ENCODE measurements at regions of chr17 and their contacts with region 1.

Region 1: DNA sequence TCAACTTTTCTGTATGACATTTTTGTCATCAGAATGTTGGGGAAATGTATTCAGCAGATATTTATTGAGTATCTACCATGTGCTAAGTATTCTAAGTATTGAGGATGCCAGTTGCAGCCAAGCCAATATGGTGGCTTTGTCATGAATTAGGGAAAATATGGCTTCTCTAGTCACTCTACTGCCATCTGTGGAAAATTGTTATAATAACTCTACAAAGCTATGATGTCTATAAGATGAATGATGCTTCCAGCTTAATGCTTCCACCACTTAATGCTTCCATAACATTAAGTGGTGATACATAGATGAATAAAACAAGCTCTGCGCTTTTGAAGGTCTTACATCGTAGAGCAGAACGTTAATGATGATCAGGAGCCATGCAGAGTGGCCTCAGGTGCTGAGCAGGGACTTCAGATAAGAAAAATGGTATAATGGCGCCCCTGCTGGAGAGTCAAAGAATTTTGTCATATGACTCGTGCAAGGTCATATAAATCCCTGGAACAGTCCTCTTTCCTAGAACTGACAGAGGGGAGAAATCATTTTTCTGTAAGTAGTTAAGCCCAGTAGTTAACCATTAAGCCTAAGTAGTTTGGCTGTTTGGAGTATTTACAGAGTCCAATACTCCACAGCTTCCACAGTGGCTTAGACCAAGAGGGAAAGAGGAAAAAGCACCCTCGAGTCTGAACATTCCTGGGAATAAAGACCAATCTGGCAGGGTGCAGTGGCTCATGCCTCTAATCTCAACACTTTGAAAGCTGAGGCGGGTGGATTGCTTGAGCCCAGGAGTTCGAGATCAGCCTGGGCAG is 2.7 kb upstream of the TMIGD1 start:
- DNase-seq: peak; percentile 95
- ATAC-seq: peak; percentile 76
- H3K4me3 ChIP-seq: peak overlapping the region; percentile 44 to 63 (median 53); a peak in 5 of 6 replicates
- H3K27ac ChIP-seq: peak overlapping the region; percentile 94
- H3K4me1 ChIP-seq: peaks cover 85% of the 10 kb centered on the region
- H3K27me3 ChIP-seq: no peaks in the 10 kb centered on the region
- CTCF ChIP-seq: peak; percentile 80
- EP300 ChIP-seq: peak in 1 of 2 experiments; percentile 35; a peak in 1 of 4 replicates
- POLR2A ChIP-seq: peak; percentile 60 to 76
- RAD21 ChIP-seq: peak; percentile 84

Region 2: GRCh38 chr17:30104575-30105339 is 231.8 kb before region 1 on chr17:
- CTCF ChIA-PET with region 1: interaction called, 15 read pairs
- POLR2A ChIA-PET with region 1: interaction called, 13 read pairs
- in situ Hi-C with region 1: no loop called
- intact Hi-C with region 1: loop called (anchors 2 kb)
- DNase-seq: peak; percentile 88
- ATAC-seq: peak; percentile 98
- H3K4me3 ChIP-seq: peak overlapping the region; percentile 4 to 56 (median 37)
- H3K27ac ChIP-seq: peak overlapping the region; percentile 59
- H3K4me1 ChIP-seq: peaks cover 21% of the 10 kb centered on the region
- H3K27me3 ChIP-seq: 0 out of 5 replicates have a peak, but pooled peaks cover 0 to 1% of the 10 kb centered on the region in 2 experiments
- CTCF ChIP-seq: peak; percentile 94
- EP300 ChIP-seq: peak in 1 of 2 experiments; percentile 4; a peak in 1 of 4 replicates
- POLR2A ChIP-seq: peak in 1 of 2 experiments; percentile 46; a peak in 1 of 4 replicates
- RAD21 ChIP-seq: peak; percentile 79

Region 3: GRCh38 chr17:30124273-30124796 is 212.2 kb before region 1 on chr17:
- CTCF ChIA-PET with region 1: interaction called, 12 read pairs
- POLR2A ChIA-PET with region 1: interaction called, 4 read pairs
- in situ Hi-C with region 1: loop called (anchors 5 kb)
- intact Hi-C with region 1: loop called (anchors 1 kb)
- DNase-seq: no peak
- ATAC-seq: no peak
- H3K4me3 ChIP-seq: no peak overlapping the region
- H3K27ac ChIP-seq: no peak overlapping the region
- H3K4me1 ChIP-seq: peaks cover 24% of the 10 kb centered on the region
- H3K27me3 ChIP-seq: no peaks in the 10 kb centered on the region
- CTCF ChIP-seq: no peak
- EP300 ChIP-seq: no peak
- POLR2A ChIP-seq: no peak
- RAD21 ChIP-seq: no peak

Region 4: DNA sequence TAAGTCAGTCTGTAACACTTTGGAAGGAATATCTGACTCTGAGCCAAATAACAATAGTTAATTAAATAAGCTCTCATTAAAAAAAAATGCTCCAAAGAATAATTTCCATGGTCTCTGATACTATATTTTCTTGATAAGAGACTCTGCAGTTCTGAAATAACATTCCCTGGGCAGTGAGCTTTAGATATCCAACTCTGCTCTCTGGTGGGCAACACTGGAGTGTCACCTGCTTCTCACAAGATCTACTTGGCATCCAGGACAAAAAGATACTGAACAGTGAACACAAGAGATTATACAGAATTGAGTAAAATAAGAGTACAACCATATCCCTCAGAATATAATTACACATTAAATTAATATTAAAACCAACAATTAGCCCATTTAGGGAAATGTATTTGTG is 58.5 kb before region 1 on chr17:
- CTCF ChIA-PET with region 1: interaction called, 3 read pairs
- POLR2A ChIA-PET with region 1: no interaction called
- in situ Hi-C with region 1: no loop called
- intact Hi-C with region 1: loop called (anchors 5 kb)
- DNase-seq: peak; percentile 49
- ATAC-seq: peak; percentile 67; the same call in 2 of the 3 replicates
- H3K4me3 ChIP-seq: no peak overlapping the region
- H3K27ac ChIP-seq: no peak overlapping the region
- H3K4me1 ChIP-seq: no peaks in the 10 kb centered on the region
- H3K27me3 ChIP-seq: no peaks in the 10 kb centered on the region
- CTCF ChIP-seq: peak; percentile 61
- EP300 ChIP-seq: no peak
- POLR2A ChIP-seq: no peak
- RAD21 ChIP-seq: peak; percentile 50; the same call in 1 of the 2 replicates

Region 5: DNA sequence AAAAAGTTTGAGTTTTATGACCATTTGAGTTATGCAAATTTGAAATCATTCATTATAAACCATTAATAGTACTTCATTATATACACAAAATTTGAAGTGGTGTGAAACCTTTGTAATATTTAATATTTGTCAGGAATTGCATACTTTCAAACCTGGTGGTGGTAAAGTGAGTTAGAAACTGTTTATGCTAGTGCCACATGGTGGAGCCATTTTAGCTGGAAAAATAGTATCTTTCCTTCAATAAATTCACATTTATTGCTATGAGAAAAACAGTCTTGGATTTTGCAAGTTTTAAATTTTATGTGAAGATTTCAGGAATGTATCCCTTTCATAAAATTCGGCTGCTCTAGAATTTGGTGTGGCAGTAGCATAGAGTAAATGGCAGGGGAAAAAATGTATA is 37.6 kb before region 1 on chr17:
- CTCF ChIA-PET with region 1: interaction called, 15 read pairs
- POLR2A ChIA-PET with region 1: no interaction called
- in situ Hi-C with region 1: loop called (anchors 5 kb)
- intact Hi-C with region 1: loop called (anchors 1 kb)
- DNase-seq: no peak
- ATAC-seq: no peak
- H3K4me3 ChIP-seq: no peak overlapping the region
- H3K27ac ChIP-seq: no peak overlapping the region
- H3K4me1 ChIP-seq: no peaks in the 10 kb centered on the region
- H3K27me3 ChIP-seq: no peaks in the 10 kb centered on the region; a peak in 1 of 5 replicates
- CTCF ChIP-seq: 0 out of 2 replicates have a peak, but pooled peaks have one; percentile 20
- EP300 ChIP-seq: no peak
- POLR2A ChIP-seq: no peak
- RAD21 ChIP-seq: no peak

Region 6: GRCh38 chr17:30309591-30309990 is 27.0 kb before region 1 on chr17:
- CTCF ChIA-PET with region 1: no interaction called
- POLR2A ChIA-PET with region 1: no interaction called
- in situ Hi-C with region 1: no loop called
- intact Hi-C with region 1: no loop called
- DNase-seq: no peak
- ATAC-seq: no peak
- H3K4me3 ChIP-seq: no peak overlapping the region
- H3K27ac ChIP-seq: no peak overlapping the region
- H3K4me1 ChIP-seq: peaks cover under 1% of the 10 kb centered on the region; the same call in 1 of the 2 replicates
- H3K27me3 ChIP-seq: 0 out of 5 replicates have a peak, but pooled peaks cover 0 to under 1% of the 10 kb centered on the region in 2 experiments
- CTCF ChIP-seq: no peak
- EP300 ChIP-seq: no peak
- POLR2A ChIP-seq: no peak
- RAD21 ChIP-seq: no peak